B cell (primary cell): ENCODE measurements at regions of chr6 and their contacts with region 1.

Region 1: DNA sequence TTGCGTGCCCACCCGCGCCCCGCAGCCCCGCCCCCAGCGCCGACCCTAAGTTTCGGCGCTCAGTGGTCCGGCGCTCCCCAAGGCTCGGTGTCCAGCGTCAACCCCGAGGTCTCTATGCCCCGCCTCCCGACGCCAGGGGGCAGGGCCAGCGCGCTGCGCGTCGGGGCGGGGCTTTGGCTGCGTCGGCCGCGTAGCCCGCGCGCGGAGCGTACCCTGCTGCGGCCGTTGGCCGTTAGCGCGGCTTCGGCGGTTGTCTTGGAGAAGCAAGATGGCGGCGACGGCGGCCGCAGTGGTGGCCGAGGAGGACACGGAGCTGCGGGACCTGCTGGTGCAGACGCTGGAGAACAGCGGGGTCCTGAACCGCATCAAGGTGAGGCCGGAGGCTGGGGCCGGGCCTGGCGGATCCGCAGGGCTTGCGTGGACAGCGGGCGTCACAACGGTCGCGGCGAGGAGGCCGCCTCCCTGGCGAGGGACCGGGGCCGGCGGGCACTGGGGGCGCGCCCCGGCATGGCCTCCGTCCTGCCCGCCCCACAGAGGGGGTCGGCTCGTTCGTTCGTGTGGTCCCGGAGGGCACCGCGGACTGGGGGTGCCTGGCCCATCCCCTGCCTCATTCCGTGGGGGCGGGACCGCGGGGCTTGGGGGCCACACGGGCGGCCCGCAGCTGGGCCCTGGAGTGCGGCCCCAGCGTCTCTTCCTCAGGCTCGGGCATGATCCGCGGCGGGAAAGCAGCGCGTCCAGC is at the start of gene CEP43:
- DNase-seq: peak; percentile 98
- ATAC-seq: peak; percentile 95
- H3K4me3 ChIP-seq: peak within 1 kb of the TSS; percentile 70 to 95 (median 91)
- H3K4me3 Mint-ChIP-seq: peak within 1 kb of the TSS; percentile 91
- H3K27ac ChIP-seq: peak within 1 kb of the TSS; percentile 31 to 83
- H3K27ac Mint-ChIP-seq: peak within 1 kb of the TSS; percentile 86
- H3K4me1 ChIP-seq: peaks cover 21 to 23% of the 10 kb centered on the region in 2 donors
- H3K4me1 Mint-ChIP-seq: peaks cover 29% of the 10 kb centered on the region
- H3K27me3 ChIP-seq: no peaks in the 10 kb centered on the region
- H3K27me3 Mint-ChIP-seq: no peaks in the 10 kb centered on the region
- CTCF ChIP-seq: no peak
- total RNA-seq, gene CEP43: 33.7 and 39.7 TPM in 2 replicates

Region 2: DNA sequence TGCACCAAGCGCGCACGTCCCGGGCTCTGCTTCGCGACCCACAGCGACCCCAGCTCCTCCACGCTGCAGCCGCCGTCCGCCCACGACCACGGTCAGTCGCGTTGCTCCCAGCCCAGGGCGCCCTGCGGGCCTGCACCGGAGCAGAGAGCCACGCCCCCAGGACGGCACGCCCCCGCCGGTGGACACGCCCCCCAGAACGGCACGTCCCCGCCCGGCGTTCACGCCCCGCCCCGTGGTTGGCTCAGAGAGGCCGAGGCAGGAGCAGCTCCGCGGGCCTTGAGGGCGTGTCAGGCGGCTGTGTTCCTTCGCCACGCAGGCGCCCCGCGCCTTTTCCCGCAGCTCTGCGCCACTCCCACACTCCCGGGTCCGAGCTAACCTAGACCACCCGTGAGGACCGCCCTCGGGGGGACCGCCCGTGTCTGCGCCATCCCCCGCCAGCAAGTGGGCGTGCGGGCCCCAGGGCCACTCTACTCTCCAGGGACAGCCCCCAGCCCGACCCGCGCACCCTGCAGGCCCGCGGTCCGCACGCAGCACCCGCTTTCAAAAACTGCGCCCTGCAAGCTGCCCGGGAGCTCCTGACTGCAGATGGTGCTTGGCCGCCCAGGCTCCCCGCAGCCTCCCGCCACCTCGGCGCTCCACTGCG is 42.7 kb before region 1 on chr6 and contains the start of gene RNASET2:
- CTCF ChIA-PET with region 1: interaction called, 5 read pairs
- POLR2A ChIA-PET with region 1: interaction called, 3 read pairs
- intact Hi-C with region 1: loop called (anchors 1 kb)
- DNase-seq: peak; percentile 96
- ATAC-seq: peak; percentile 85
- H3K4me3 ChIP-seq: peak within 1 kb of the TSS; percentile 79 to 97 (median 89)
- H3K4me3 Mint-ChIP-seq: peak within 1 kb of the TSS; percentile 93
- H3K27ac ChIP-seq: peak within 1 kb of the TSS; percentile 94 to 98
- H3K27ac Mint-ChIP-seq: peak within 1 kb of the TSS; percentile 100
- H3K4me1 ChIP-seq: peaks cover 65 to 78% of the 10 kb centered on the region in 2 donors
- H3K4me1 Mint-ChIP-seq: peaks cover 73% of the 10 kb centered on the region
- H3K27me3 ChIP-seq: no peaks in the 10 kb centered on the region
- H3K27me3 Mint-ChIP-seq: no peaks in the 10 kb centered on the region
- CTCF ChIP-seq: no peak
- total RNA-seq, gene RNASET2: 293 and 302 TPM in 2 replicates

Region 3: DNA sequence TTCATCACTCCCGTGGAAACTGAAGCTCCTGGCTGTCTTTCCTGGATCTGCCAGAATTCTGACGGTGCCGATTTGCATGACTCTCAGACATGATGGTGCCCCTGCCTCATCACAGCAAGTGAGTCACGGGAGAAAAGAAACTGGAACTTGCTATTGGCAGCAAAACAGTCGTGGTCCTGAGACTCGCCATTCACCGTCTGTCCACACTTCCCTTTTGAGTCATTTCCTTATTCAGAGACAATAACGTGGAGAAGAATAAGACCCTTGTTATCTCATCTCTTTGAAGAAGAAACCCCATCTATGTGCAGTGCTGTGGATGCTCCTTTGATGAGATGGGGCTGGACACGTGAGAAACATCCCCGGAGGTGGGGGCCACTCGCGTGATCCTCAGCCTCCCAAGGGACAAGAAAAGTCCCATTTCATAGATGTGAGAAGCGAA is 154.2 kb after region 1 on chr6:
- CTCF ChIA-PET with region 1: interaction called, 3 read pairs
- POLR2A ChIA-PET with region 1: no interaction called
- intact Hi-C with region 1: loop called (anchors 1 kb)
- DNase-seq: peak; percentile 77
- ATAC-seq: peak; percentile 65
- H3K4me3 ChIP-seq: peak overlapping the region in 4 of 5 experiments; percentile 15 to 52 (median 37)
- H3K4me3 Mint-ChIP-seq: peak overlapping the region; percentile 86
- H3K27ac ChIP-seq: peak overlapping the region; percentile 72 to 83
- H3K27ac Mint-ChIP-seq: peak overlapping the region; percentile 89
- H3K4me1 ChIP-seq: peaks cover 44 to 55% of the 10 kb centered on the region in 2 donors
- H3K4me1 Mint-ChIP-seq: peaks cover 60% of the 10 kb centered on the region
- H3K27me3 ChIP-seq: no peaks in the 10 kb centered on the region
- H3K27me3 Mint-ChIP-seq: no peaks in the 10 kb centered on the region
- CTCF ChIP-seq: no peak